A549 (cell line): ENCODE measurements at regions of chr5 and their contacts with region 1.

Region 1: DNA sequence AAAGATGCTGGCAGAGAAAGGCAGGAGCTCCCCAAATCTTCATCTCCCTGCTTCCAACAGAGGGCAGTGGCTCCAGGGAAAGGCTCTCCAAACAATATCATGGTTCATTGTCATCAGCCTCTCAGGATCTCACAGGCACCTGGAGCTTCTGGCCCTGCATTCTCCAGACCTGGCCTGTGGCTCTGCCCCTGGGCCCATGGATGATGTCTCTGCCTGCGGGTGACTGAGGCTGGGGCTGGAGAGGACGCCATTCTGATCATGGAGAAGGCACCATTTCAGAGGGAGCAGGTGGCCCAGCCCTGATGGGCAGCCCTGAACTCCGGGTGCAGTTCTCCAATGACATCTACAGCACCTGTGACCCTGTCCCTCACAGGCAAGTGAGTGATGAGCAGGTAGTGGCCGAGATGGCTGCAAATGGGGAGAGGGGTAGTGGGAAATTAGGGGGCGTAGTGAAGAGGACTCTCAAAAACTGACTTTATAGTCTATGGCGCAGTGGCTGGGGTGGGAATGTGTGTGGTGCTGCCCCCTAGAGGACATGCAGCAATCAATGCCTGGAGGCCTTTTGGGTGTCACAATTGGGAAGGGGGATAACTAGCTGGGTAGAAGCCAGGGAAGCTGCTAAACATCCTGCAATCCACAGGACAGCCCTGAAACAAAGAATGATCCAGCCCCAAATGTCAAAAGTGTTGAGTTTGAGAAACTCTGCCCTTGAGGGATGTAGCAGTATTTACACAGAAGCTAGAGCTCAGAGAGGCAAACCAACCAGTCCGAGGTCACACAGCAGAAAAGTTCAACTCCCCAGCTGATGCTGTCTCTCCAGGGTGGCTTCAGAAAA is 3.2 kb downstream of the SH3PXD2B start:
- DNase-seq: peak; percentile 54 to 71
- ATAC-seq: peak in 1 of 2 experiments; percentile 47; a peak in 3 of 6 replicates
- H3K4me3 ChIP-seq: no peak overlapping the region
- H3K27ac ChIP-seq: peak overlapping the region in 1 of 2 experiments; percentile 35; a peak in 3 of 6 replicates
- H3K4me1 ChIP-seq: peaks cover 25% of the 10 kb centered on the region
- CTCF ChIP-seq: peak; percentile 71
- EP300 ChIP-seq: no peak
- POLR2A ChIP-seq: no peak
- RAD21 ChIP-seq: peak; percentile 41; a peak in 4 of 5 replicates

Region 2: DNA sequence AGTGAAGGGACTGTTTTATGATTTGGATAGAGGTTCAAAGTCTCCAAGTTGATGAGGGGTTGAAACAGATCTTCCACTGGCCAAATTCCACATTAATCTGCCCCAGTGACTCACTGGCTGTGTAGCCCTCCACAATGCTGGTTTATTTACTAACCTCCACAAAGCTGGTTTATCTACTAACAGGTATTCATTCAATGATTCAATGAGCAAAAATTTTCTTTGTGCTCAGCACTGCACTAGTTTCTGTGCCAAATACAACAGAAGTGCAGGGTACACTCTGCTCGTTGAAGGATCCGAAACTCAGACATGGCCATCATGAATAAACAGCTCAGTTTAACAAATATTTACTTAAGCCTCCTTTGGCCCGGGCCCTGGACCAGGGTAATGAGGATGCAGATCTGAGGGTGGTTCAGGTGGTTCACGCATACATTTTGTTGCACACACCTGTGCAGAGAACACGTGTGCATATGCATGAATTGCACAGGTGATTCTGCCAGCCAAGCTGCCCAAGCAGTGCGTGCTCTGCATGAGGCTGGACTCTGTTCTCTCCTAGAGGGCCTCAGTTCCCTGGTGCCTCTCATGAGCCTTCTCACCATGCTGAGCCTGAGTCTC is 67.8 kb before region 1 on chr5:
- CTCF ChIA-PET with region 1: interaction called, 28 read pairs
- POLR2A ChIA-PET with region 1: no interaction called
- DNase-seq: peak; percentile 66 to 86
- ATAC-seq: peak; percentile 87 to 93
- H3K4me3 ChIP-seq: no peak overlapping the region
- H3K27ac ChIP-seq: peak overlapping the region; percentile 78 to 79
- H3K4me1 ChIP-seq: peaks cover 34% of the 10 kb centered on the region
- CTCF ChIP-seq: no peak
- EP300 ChIP-seq: peak; percentile 52 to 81; a peak in 3 of 5 replicates
- POLR2A ChIP-seq: no peak
- RAD21 ChIP-seq: peak in 1 of 2 experiments; percentile 12; a peak in 1 of 5 replicates

Region 3: DNA sequence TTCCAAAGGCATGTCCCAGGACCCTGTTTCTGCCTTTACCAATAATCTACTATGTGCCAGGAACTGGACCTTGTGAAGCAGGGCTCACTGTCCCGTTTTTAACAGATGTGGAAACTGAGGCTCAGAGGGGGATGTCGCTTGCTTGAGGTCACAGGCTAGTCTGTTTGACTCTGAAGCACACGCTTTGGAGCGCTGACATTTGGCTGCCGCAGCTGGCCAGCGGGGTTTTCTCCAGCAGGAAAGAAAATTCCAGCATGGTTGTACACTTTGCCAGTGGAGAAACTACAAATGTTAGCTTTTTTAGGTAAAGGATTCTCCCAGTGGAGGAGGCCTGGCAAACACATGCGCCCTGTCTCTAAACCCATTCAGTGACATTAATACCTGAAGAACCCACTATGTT is 47.3 kb before region 1 on chr5:
- CTCF ChIA-PET with region 1: interaction called, 16 read pairs
- POLR2A ChIA-PET with region 1: no interaction called
- DNase-seq: no peak
- ATAC-seq: no peak
- H3K4me3 ChIP-seq: no peak overlapping the region
- H3K27ac ChIP-seq: no peak overlapping the region
- H3K4me1 ChIP-seq: peaks cover 9% of the 10 kb centered on the region; the same call in 1 of the 3 replicates
- CTCF ChIP-seq: no peak
- EP300 ChIP-seq: no peak
- POLR2A ChIP-seq: no peak
- RAD21 ChIP-seq: no peak

Region 4: GRCh38 chr5:172414531-172415361 is 36.3 kb before region 1 on chr5:
- CTCF ChIA-PET with region 1: interaction called, 11 read pairs
- POLR2A ChIA-PET with region 1: interaction called, 4 read pairs
- DNase-seq: no peak
- ATAC-seq: peak; percentile 28 to 42; a peak in 4 of 6 replicates
- H3K4me3 ChIP-seq: no peak overlapping the region
- H3K27ac ChIP-seq: peak overlapping the region; percentile 37 to 75; a peak in 5 of 6 replicates
- H3K4me1 ChIP-seq: peaks cover 54% of the 10 kb centered on the region
- CTCF ChIP-seq: no peak
- EP300 ChIP-seq: no peak
- POLR2A ChIP-seq: no peak
- RAD21 ChIP-seq: no peak

Region 5: GRCh38 chr5:172429201-172429940 is 21.7 kb before region 1 on chr5:
- CTCF ChIA-PET with region 1: interaction called, 39 read pairs
- POLR2A ChIA-PET with region 1: no interaction called
- DNase-seq: no peak
- ATAC-seq: peak in 1 of 2 experiments; percentile 49; a peak in 1 of 6 replicates
- H3K4me3 ChIP-seq: no peak overlapping the region
- H3K27ac ChIP-seq: peak overlapping the region in 1 of 2 experiments; percentile 15; a peak in 1 of 6 replicates
- H3K4me1 ChIP-seq: 0 out of 3 replicates have a peak, but pooled peaks cover 6% of the 10 kb centered on the region
- CTCF ChIP-seq: no peak
- EP300 ChIP-seq: no peak
- POLR2A ChIP-seq: no peak
- RAD21 ChIP-seq: no peak

Region 6: DNA sequence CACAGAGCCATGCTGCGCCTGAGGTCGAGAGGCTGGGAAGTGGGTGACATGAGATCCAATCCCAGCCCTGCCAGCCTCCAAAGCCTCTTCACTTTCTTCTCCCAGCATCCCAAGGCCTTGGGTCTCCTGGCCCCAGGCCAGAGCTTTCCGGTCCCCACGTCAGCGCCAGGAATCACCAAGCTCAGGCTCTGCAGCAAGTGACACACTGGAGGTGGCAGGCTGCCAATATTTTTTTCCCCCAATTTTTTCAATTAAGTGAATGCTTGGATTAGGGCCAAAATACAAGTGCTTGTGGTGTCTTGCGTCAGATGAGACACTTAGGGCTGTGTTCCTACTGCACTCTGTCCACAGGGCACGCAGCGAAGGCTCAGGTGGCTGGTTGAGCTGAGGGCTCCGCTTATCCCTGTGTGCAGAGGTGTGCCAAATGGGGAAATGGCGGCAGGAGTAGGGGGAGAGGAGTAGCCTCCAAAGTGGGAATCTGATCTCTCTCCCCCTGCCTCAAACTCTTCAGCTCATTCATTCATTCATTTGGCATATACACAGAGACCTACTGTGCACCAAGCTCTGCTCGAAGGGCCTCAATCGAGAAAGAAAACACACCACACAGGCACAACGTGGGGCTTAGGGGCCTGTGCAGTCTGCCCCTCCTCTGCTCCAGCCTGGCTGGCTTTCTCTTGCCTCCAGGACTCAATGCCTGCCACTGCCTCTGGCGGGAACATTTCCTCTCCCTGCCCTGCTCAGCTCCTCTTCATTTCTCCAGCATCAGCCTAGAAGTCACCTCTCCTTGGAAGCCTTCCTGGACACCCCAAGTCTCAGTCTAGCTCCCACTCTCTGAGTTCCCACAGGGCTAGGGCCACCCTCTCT is 13.4 kb before region 1 on chr5:
- CTCF ChIA-PET with region 1: interaction called, 44 read pairs
- POLR2A ChIA-PET with region 1: no interaction called
- DNase-seq: peak in 1 of 2 experiments; percentile 49
- ATAC-seq: peak in 1 of 2 experiments; percentile 51; a peak in 3 of 6 replicates
- H3K4me3 ChIP-seq: no peak overlapping the region
- H3K27ac ChIP-seq: peak overlapping the region; percentile 48 to 59; a peak in 5 of 6 replicates
- H3K4me1 ChIP-seq: peaks cover 21% of the 10 kb centered on the region
- CTCF ChIP-seq: no peak
- EP300 ChIP-seq: no peak
- POLR2A ChIP-seq: no peak
- RAD21 ChIP-seq: no peak